OCI-LY7 (cell line): ENCODE measurements at regions of chr10 and their contacts with region 1.

Region 1: GRCh38 chr10:16656895-16657294 is 135.2 kb upstream of the C1QL3 start:
- DNase-seq: no peak
- H3K4me3 ChIP-seq: no peak overlapping the region
- H3K27ac ChIP-seq: no peak overlapping the region
- H3K4me1 ChIP-seq: no peaks in the 10 kb centered on the region
- CTCF ChIP-seq: no peak

Region 2: DNA sequence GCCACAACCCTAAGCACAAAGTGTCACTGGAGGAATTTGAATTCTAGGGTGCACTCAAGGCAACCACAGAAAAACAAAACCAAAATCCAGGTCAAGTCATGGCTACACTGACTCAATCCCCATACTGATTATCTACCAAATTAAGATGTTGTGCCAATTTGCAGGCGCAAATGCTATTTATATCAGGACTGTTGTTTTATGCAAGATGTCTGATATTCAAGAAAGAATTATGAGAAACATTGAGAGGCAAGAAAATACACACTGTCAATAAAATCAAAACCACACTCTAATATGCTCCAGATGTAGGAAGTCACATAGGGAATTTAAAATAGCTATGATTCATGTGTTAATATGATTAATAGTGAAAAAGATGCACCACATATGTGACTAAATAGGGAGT is 655.3 kb before region 1 on chr10:
- CTCF ChIA-PET with region 1: no interaction called
- POLR2A ChIA-PET with region 1: no interaction called
- intact Hi-C with region 1: no loop called
- DNase-seq: no peak
- H3K4me3 ChIP-seq: no peak overlapping the region
- H3K27ac ChIP-seq: no peak overlapping the region
- H3K4me1 ChIP-seq: no peaks in the 10 kb centered on the region
- CTCF ChIP-seq: no peak

Region 3: DNA sequence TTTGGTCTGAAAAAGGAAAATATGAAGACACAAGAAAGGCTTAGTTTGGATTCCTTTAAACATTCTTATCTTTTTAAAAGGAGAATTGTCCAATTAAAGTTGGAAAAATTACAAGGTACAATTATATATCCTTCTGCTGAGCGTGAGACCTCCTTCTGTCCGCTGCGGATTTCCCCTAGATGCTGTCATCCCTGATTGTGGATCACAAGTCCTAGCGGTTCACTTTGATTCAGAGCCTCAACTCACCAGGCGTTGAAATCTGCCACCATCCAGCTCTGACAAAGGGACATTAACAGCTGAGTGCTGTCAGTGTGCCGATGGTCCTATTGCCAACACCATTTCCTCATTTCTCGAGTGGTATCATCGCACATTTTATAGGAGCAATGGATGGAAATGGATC is 293.2 kb before region 1 on chr10:
- CTCF ChIA-PET with region 1: no interaction called
- POLR2A ChIA-PET with region 1: interaction called, 14 read pairs
- intact Hi-C with region 1: no loop called
- DNase-seq: no peak
- H3K4me3 ChIP-seq: no peak overlapping the region
- H3K27ac ChIP-seq: no peak overlapping the region
- H3K4me1 ChIP-seq: no peaks in the 10 kb centered on the region
- CTCF ChIP-seq: no peak

Region 4: GRCh38 chr10:16586358-16587138 is 70.3 kb before region 1 on chr10:
- CTCF ChIA-PET with region 1: no interaction called
- POLR2A ChIA-PET with region 1: no interaction called
- intact Hi-C with region 1: no loop called
- DNase-seq: no peak
- H3K4me3 ChIP-seq: no peak overlapping the region
- H3K27ac ChIP-seq: no peak overlapping the region
- H3K4me1 ChIP-seq: no peaks in the 10 kb centered on the region
- CTCF ChIP-seq: no peak

Region 5: GRCh38 chr10:16673443-16673842 is 16.5 kb after region 1 on chr10:
- CTCF ChIA-PET with region 1: no interaction called
- POLR2A ChIA-PET with region 1: no interaction called
- intact Hi-C with region 1: no loop called
- DNase-seq: no peak
- H3K4me3 ChIP-seq: no peak overlapping the region
- H3K27ac ChIP-seq: no peak overlapping the region
- H3K4me1 ChIP-seq: no peaks in the 10 kb centered on the region
- CTCF ChIP-seq: no peak